ENCODE measurements at regions of chr6 and their contacts with region 1.

Region 1: GRCh38 chr6:150813319-150813992 is 52.0 kb upstream of the MTHFD1L start:
- DNase-seq: no peak

Region 2: DNA sequence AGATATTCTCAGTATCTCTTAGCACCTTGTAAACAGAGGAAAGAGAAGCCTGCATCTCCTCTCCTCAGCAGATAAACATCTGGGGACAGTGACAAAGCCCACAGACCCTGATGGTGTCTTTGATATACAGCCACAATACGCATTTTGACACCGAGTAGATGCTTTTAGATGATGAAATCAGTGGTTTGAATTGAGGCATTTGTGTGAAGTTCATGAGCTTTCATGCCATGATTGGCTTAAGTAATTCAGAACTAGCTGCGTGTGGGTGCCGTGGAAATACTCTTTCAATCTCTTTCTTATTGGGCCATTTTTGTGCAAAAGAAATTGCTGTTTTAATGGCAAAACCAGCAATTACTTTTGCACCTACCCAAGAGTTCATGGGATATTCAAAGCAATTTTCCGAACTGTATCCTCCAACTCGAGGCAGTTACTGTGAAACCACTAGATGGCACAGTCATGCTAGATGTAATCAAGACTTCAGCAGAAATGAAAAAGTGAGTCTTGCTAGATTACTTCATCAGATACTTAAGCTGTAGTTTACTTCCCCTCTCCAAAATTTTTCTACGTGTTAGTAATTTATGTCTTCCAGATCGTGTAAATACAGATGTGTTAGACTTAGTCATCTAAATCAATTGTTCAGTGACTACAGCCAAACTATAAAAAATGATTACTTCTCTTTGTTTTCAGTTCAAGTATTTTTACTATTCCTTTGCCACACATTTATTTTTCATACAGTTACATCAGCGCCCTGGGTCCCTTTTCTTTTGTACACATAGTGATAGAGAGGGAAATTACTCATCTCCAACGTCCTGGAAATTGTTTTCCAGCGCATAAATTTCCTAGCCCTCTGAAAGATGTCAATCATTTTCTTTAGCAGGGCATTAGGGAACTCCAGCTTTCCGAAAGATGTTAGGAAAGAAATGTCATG is 395.3 kb before region 1 on chr6:
- intact Hi-C with region 1: loop called (anchors 1 kb)
- DNase-seq: no peak

Region 3: DNA sequence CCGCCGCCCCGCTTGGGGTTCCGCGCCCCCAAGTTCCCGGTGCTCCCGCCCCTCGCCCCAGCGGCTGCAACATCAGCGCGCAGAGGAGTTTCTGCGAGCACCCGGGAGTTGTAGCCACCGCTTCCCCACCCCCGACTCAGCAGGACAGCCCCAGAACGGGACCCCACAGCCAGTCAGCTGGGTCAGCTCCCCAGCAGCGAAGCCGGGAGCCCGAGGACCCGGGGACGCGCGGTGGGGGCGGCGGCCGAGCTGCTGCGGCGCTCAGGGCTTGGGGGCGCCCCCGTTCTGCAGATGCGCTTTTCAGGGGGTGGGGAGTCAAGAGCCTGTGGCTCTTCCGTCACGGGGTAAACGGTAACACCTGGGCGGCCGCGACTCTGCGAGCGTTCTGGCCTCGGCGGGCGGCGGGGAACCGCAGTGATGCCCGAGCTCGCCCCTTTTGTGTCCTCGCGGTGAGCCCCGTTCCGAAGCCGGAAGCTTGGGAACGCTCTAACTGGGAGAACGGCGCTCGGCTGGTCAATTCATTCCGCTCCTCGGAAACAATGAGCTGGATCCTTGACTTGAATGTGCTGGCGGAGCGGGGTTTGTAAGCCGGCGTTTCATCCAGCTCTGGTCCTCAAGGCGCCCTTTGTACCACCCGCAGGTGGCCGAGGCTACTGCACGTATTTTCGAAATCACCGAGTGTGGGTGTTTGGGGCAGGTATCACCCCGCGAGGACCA is 213.0 kb before region 1 on chr6:
- intact Hi-C with region 1: loop called (anchors 5 kb)
- DNase-seq: no peak

Region 4: DNA sequence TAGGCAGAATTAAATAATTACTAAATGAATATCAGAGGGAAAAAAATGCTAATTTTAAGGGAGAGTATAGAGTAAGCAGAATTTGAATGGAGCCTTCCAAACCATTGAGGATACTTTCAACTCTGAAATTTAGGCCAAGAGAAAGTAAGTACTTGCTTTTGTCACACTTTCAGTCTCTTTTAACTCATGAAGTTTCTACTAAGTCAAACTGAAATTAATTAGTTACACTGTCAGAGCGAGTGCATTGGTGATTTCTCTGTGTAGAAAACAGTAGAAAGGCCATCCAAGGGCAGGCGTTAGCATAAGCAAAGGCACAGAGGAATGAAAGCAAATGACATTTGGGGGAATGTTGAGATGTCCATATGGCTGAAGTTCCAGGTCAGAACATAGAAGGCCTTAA is 120.9 kb before region 1 on chr6:
- intact Hi-C with region 1: loop called (anchors 10 kb)
- DNase-seq: no peak

Region 5: GRCh38 chr6:150841697-150842096 is 28.2 kb after region 1 on chr6:
- intact Hi-C with region 1: no loop called
- DNase-seq: no peak